ENCODE measurements at regions of chr20 and their contacts with region 1.

Region 1: GRCh38 chr20:35146920-35147574 is at the start of gene EDEM2:
- DNase-seq: peak; percentile 73 to 96
- H3K4me3 ChIP-seq: peak within 1 kb of the TSS; percentile 63 to 64
- H3K27ac ChIP-seq: peak within 1 kb of the TSS; percentile 61 to 70
- H3K4me1 ChIP-seq: peaks cover 0 to 12% of the 10 kb centered on the region in 2 donors
- H3K27me3 ChIP-seq: no peaks in the 10 kb centered on the region
- CTCF ChIP-seq: no peak
- total RNA-seq, gene EDEM2: 20.3 TPM

Region 2: DNA sequence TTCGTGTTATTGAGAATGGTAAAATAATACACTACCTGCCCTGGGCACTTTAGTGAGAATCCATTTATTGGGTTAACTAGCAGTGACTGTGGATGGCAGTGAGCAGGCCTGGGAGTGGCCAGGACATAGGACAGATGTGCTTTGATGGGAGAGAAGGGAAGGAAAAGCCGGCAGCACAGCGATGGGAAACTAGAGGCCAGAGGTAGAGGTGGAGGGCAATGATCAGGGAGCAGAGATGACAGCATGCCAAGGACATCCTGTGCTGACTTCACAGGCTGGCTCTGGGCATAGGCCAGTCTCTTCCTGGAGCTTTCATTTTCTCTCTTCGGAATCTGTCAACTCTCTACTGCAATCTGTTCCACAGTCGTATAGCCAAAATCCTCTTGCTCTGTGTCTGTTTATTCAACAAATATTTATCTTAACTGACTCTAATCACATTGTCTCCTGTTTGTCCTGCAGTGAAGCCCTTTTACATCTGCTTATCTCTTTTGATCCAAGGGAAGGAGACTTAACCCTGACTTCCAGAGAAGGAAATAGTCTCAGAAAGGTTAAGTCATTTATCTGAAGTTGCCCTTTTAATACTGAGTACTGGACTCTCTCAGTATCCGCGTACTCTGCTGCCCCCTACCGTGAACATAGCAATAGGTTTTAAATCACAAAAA is 61.0 kb after region 1 on chr20:
- intact Hi-C with region 1: loop called (anchors 1 kb)
- DNase-seq: peak in 1 of 2 donors; percentile 89
- H3K4me3 ChIP-seq: peak overlapping the region in 1 of 2 donors; percentile 42
- H3K27ac ChIP-seq: peak overlapping the region; percentile 77 to 79
- H3K4me1 ChIP-seq: peaks cover 0 to 4% of the 10 kb centered on the region in 2 donors
- H3K27me3 ChIP-seq: no peaks in the 10 kb centered on the region
- CTCF ChIP-seq: peak; percentile 60 to 87 (median 79)

Region 3: DNA sequence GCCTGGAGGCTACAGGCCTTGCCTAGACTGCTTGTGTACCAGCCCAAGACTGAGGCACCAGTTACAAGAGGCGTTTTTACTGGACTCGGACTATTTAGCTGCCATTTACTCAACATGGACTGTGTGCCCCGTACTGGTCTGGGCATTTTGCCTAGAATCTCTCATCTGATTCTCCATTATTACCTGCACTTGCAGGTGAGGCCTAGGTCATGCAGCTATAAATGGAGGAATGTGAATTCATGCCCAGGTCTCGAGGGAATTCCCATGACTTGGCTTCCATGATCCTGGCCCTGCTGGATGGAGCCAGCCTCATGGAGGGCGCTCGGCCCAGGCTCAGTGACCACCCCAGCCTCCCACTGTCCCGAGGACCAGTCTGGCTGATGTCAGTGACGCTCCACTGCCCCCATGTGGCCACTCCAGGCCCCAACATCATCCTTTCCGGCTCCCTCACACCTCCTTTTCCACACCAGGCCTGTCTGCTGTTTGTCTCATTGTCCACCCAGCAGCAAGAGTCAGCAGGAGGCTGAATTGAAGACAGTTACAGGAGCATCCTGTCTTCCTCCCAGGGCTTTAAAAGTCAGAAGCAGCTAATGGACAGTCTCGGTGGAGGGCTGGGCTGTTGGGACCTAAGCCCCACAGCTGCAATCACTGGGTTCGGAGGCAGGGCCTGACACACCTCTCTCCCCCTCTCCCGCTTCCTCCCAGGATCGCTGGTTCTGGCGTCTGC is 122.2 kb after region 1 on chr20:
- intact Hi-C with region 1: loop called (anchors 2 kb)
- DNase-seq: peak in 1 of 2 donors; percentile 79
- H3K4me3 ChIP-seq: no peak overlapping the region
- H3K27ac ChIP-seq: no peak overlapping the region
- H3K4me1 ChIP-seq: peaks cover 0 to 8% of the 10 kb centered on the region in 2 donors
- H3K27me3 ChIP-seq: no peaks in the 10 kb centered on the region
- CTCF ChIP-seq: peak; percentile 51 to 75 (median 73)

Region 4: GRCh38 chr20:35277531-35278395 is 130.7 kb after region 1 on chr20 and contains the start of gene MMP24OS:
- intact Hi-C with region 1: loop called (anchors 2 kb)
- DNase-seq: peak; percentile 58 to 94
- H3K4me3 ChIP-seq: peak within 1 kb of the TSS; percentile 97 to 99
- H3K27ac ChIP-seq: peak within 1 kb of the TSS; percentile 99 to 100
- H3K4me1 ChIP-seq: peaks cover 10 to 19% of the 10 kb centered on the region in 2 donors
- H3K27me3 ChIP-seq: no peaks in the 10 kb centered on the region
- CTCF ChIP-seq: peak in 2 of 3 experiments; percentile 13 to 56
- total RNA-seq, gene MMP24OS: 43.1 TPM

Region 5: DNA sequence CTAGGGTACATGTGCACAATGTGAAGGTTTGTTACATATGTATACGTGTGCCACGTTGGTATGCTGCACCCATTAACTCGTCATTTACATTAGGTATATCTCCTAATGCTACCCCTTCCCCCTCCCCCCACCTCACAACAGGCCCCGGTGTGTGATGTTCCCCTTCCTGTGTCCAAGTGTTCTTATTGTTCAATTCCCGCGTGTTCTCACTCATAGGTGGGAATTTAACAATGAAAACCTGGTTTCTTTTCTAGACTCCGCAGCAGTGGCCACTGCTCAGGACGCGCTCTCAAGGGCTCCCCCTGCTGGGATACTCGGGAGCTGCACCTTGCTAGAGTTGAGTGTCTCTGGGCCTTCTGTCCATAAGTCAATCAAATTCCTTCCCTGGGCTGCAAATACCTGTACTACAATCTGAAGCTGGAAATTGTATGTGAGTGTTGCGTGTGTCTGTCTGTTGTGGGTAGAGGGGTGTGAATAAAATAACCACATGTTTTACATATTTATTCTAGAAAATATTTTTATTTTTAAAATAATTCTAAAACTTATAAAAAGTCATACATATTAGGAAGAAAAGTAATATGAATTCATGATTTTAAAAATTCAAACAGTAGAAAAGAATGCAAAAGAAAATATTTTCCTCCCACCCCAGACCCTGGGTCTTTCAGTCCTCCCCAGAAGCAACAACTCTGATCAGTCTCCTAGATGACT is 300.2 kb after region 1 on chr20:
- intact Hi-C with region 1: loop called (anchors 5 kb)
- DNase-seq: peak; percentile 28 to 92
- H3K4me3 ChIP-seq: peak overlapping the region; percentile 56 to 65
- H3K27ac ChIP-seq: no peak overlapping the region
- H3K4me1 ChIP-seq: peaks cover 0 to 2% of the 10 kb centered on the region in 2 donors
- H3K27me3 ChIP-seq: no peaks in the 10 kb centered on the region
- CTCF ChIP-seq: peak; percentile 73 to 99 (median 98)

Region 6: DNA sequence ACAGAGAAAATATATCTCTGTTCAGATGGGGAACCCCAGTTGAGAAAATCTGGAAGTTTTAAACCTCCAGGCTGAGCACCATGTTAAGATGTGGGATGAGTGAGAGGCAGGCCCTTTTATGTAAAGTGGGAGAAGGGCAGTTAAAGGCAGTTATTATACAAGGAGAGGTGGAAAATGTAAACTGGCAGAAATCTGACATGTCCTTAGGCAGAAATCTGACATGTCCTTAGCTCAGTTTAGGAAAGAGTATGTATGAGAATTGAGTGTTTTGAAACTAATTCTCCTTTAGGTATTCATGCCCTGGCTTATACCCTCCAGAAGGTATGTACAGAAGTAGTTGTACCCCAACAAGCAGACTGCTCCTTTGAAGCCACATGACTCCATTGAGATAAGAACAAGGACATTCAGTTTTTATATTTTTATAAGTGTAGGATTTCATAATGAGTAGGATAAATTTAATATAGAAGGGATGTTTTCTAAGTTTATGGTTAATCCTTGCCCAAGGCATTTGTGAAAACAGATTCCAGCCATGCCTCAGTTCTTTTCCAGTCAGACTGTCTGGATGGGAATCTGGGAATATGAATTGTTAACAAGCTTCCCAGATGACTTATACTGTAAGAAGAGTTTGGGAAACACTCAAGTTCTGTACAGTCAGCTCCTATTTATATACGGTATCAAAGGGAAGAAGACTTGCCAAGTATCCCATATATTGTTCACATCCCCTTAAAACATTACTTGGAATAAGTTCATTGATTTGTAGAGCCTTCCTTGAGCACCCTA is 719.6 kb after region 1 on chr20:
- intact Hi-C with region 1: no loop called
- DNase-seq: no peak
- H3K4me3 ChIP-seq: no peak overlapping the region
- H3K27ac ChIP-seq: peak overlapping the region in 1 of 2 donors; percentile 29
- H3K4me1 ChIP-seq: peaks cover 0 to 9% of the 10 kb centered on the region in 2 donors
- H3K27me3 ChIP-seq: no peaks in the 10 kb centered on the region
- CTCF ChIP-seq: no peak